Calu3 (cell line): ENCODE measurements at regions of chr17 and their contacts with region 1.

Region 1: GRCh38 chr17:40422990-40423616 is 5.4 kb upstream of the TOP2A start:
- DNase-seq: peak; percentile 73
- H3K4me3 Mint-ChIP-seq: no peak overlapping the region
- H3K27ac Mint-ChIP-seq: no peak overlapping the region
- H3K4me1 Mint-ChIP-seq: peaks cover 20% of the 10 kb centered on the region
- H3K27me3 Mint-ChIP-seq: peaks cover 24% of the 10 kb centered on the region
- CTCF ChIP-seq: no peak

Region 2: GRCh38 chr17:40309031-40309948 is 113.8 kb before region 1 on chr17 and contains the start of gene RARA:
- CTCF ChIA-PET with region 1: interaction called, 28 read pairs
- intact Hi-C with region 1: no loop called
- DNase-seq: peak; percentile 90
- H3K4me3 Mint-ChIP-seq: no peak within 1 kb of the TSS
- H3K27ac Mint-ChIP-seq: no peak within 1 kb of the TSS
- H3K4me1 Mint-ChIP-seq: peaks cover 2% of the 10 kb centered on the region
- H3K27me3 Mint-ChIP-seq: no peaks in the 10 kb centered on the region
- CTCF ChIP-seq: no peak
- total RNA-seq, gene RARA: 150 and 170 TPM in 2 replicates

Region 3: DNA sequence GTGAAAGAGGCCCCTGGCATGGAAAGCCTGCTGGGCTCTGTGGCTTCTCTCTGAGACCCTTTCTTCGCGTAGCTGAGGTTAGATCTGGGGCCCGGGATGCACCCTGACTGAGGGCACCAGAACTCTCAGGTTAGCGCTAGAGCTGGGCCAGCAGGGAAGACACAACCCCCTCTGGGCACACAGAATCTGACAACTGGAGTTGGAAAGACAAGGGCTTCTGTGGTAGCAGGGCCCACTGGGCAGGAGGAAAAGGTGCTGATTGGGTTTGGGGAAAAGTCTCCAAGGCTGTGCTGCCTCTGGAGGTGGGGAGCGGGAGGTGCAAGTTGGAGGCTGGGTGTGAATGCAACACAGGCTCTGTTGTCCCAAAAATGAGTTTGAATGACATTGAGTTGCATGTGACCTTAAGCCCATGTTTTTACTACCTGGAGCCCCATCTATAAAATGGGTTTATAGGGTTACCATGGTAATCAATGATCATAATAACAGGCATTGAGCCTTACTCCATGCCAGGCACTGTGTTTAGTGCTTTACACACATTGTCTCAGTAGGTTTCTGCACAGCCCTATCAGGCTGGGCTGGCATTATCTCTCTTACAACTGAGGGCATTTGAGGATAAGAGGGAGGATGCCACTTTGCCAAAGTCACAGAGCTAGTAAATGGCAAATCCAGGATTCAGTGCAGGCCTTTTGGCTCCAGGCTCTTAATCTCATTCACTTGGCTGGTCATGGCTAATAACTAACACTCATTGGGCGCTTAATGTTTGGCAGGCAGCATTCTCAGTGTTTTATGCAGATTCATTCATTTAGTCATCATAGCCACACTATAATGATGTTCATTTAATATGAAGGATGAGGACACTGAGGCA is 10.7 kb after region 1 on chr17:
- CTCF ChIA-PET with region 1: interaction called, 115 read pairs
- intact Hi-C with region 1: no loop called
- DNase-seq: peak; percentile 94
- H3K4me3 Mint-ChIP-seq: no peak overlapping the region
- H3K27ac Mint-ChIP-seq: no peak overlapping the region
- H3K4me1 Mint-ChIP-seq: no peaks in the 10 kb centered on the region
- H3K27me3 Mint-ChIP-seq: peaks cover 43% of the 10 kb centered on the region
- CTCF ChIP-seq: no peak

Region 4: DNA sequence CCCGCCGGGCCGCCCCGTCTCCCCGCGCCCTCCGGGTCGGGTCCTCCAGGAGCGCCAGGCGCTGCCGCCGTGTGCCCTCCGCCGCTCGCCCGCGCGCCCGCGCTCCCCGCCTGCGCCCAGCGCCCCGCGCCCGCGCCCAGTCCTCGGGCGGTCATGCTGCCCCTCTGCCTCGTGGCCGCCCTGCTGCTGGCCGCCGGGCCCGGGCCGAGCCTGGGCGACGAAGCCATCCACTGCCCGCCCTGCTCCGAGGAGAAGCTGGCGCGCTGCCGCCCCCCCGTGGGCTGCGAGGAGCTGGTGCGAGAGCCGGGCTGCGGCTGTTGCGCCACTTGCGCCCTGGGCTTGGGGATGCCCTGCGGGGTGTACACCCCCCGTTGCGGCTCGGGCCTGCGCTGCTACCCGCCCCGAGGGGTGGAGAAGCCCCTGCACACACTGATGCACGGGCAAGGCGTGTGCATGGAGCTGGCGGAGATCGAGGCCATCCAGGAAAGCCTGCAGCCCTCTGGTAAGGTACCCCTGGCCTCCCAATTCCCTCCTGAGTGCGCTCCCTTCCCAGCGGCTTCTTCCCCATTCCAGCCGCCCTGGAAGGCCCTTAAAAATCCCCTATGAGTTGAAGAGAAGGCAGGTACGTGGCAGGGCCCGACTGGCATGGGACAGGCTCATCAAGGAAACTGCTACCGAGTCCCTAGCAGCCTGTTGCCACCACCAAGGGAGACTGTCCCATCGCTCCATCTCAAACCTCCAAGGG is 20.7 kb after region 1 on chr17:
- CTCF ChIA-PET with region 1: interaction called, 115 read pairs
- intact Hi-C with region 1: no loop called
- DNase-seq: peak; percentile 100
- H3K4me3 Mint-ChIP-seq: peak overlapping the region; percentile 1
- H3K27ac Mint-ChIP-seq: no peak overlapping the region
- H3K4me1 Mint-ChIP-seq: peaks cover 35% of the 10 kb centered on the region
- H3K27me3 Mint-ChIP-seq: peaks cover 37% of the 10 kb centered on the region
- CTCF ChIP-seq: no peak

Region 5: DNA sequence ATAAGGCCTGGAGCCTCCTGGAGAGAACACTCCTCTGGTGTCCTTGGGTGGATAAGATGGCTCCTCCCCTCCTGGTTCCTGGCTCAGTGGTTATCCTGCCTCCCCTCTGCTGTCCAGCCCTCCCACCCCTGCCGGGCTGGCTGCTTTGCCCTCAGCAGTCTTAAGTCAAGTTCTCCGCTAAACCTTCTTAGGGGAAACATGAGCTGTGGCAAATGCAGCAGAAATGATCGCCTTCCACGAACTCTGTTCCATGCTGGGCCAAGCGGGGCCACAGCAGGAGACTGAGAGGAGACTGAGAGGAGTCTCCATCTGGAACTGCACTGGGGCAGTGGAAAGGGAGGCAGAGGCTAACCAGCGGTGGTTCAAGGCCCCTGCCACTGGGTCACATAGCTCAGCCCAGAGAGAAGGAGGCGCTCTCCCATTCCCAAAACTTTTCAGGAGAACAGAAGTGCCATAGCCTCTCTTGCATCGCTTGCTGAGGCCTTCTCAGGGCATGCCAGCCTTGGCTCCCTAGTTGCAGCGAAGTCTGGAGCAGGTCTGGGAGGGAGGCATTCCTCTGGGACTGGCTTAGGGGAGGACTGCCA is 51.4 kb after region 1 on chr17:
- CTCF ChIA-PET with region 1: interaction called, 227 read pairs
- intact Hi-C with region 1: no loop called
- DNase-seq: no peak
- H3K4me3 Mint-ChIP-seq: no peak overlapping the region
- H3K27ac Mint-ChIP-seq: no peak overlapping the region
- H3K4me1 Mint-ChIP-seq: no peaks in the 10 kb centered on the region
- H3K27me3 Mint-ChIP-seq: peaks cover 65% of the 10 kb centered on the region
- CTCF ChIP-seq: no peak